K562 (cell line): ENCODE measurements at regions of chr1 and their contacts with region 1.

Region 1: GRCh38 chr1:39822091-39822490 is 33.4 kb upstream of the BMP8B start:
- DNase-seq: no peak
- ATAC-seq: no peak
- H3K4me3 ChIP-seq: no peak overlapping the region
- H3K27ac ChIP-seq: no peak overlapping the region
- H3K4me1 ChIP-seq: peaks cover 3 to 8% of the 10 kb centered on the region in 2 experiments; a peak in 4 of 5 replicates
- H3K27me3 ChIP-seq: peaks cover 0 to 11% of the 10 kb centered on the region in 2 experiments; a peak in 2 of 5 replicates
- CTCF ChIP-seq: no peak
- EP300 ChIP-seq: no peak
- POLR2A ChIP-seq: no peak
- RAD21 ChIP-seq: no peak

Region 2: GRCh38 chr1:39808784-39809517 is 13.1 kb before region 1 on chr1:
- CTCF ChIA-PET with region 1: no interaction called
- POLR2A ChIA-PET with region 1: no interaction called
- in situ Hi-C with region 1: no loop called
- intact Hi-C with region 1: no loop called
- DNase-seq: no peak
- ATAC-seq: no peak
- H3K4me3 ChIP-seq: no peak overlapping the region
- H3K27ac ChIP-seq: no peak overlapping the region
- H3K4me1 ChIP-seq: no peaks in the 10 kb centered on the region
- H3K27me3 ChIP-seq: peaks cover 0 to 2% of the 10 kb centered on the region in 2 experiments; a peak in 1 of 5 replicates
- CTCF ChIP-seq: no peak
- EP300 ChIP-seq: no peak
- POLR2A ChIP-seq: no peak
- RAD21 ChIP-seq: no peak

Region 3: GRCh38 chr1:39907528-39908453 is 85.7 kb after region 1 on chr1:
- CTCF ChIA-PET with region 1: interaction called, 43 read pairs
- POLR2A ChIA-PET with region 1: no interaction called
- in situ Hi-C with region 1: loop called (anchors 5 kb)
- intact Hi-C with region 1: no loop called
- DNase-seq: no peak
- ATAC-seq: no peak
- H3K4me3 ChIP-seq: no peak overlapping the region
- H3K27ac ChIP-seq: no peak overlapping the region
- H3K4me1 ChIP-seq: no peaks in the 10 kb centered on the region
- H3K27me3 ChIP-seq: peaks cover 4 to 8% of the 10 kb centered on the region in 2 experiments
- CTCF ChIP-seq: no peak
- EP300 ChIP-seq: no peak
- POLR2A ChIP-seq: no peak
- RAD21 ChIP-seq: no peak

Region 4: DNA sequence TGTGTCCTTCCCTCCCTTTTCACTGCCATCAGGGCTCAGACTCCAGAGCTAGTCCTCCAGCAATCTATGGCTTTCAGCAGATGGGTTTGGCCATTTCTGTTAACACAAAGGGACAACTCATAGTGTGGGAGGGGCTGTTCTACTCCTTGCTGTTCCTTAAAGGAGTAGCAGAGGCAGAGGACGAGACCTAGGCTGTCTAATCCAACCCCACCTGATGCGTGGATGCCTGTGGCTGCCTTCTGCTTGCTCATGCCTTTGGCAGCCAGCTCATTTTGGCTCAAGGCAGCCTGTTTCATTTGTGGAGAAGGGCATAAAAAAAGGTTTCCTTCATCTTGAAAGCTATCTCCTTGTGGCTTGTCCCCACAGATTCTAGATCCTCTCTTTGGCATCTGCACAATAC is 159.9 kb after region 1 on chr1:
- CTCF ChIA-PET with region 1: no interaction called
- POLR2A ChIA-PET with region 1: no interaction called
- in situ Hi-C with region 1: loop called (anchors 5 kb)
- intact Hi-C with region 1: no loop called
- DNase-seq: peak in 2 of 4 experiments; percentile 6 to 36
- ATAC-seq: peak; percentile 80
- H3K4me3 ChIP-seq: no peak overlapping the region
- H3K27ac ChIP-seq: no peak overlapping the region
- H3K4me1 ChIP-seq: peaks cover 3 to 8% of the 10 kb centered on the region in 2 experiments; a peak in 4 of 5 replicates
- H3K27me3 ChIP-seq: no peaks in the 10 kb centered on the region
- CTCF ChIP-seq: no peak
- EP300 ChIP-seq: no peak
- POLR2A ChIP-seq: no peak
- RAD21 ChIP-seq: no peak